A673 (cell line): ENCODE measurements at regions of chr11 and their contacts with region 1.

Region 1: GRCh38 chr11:19276859-19277808 is 36.4 kb upstream of the E2F8 start:
- DNase-seq: no peak
- H3K4me3 ChIP-seq: no peak overlapping the region
- H3K27ac ChIP-seq: no peak overlapping the region
- H3K4me1 ChIP-seq: no peaks in the 10 kb centered on the region
- H3K27me3 ChIP-seq: no peaks in the 10 kb centered on the region
- CTCF ChIP-seq: no peak

Region 2: GRCh38 chr11:19244102-19244501 is 33.0 kb before region 1 on chr11:
- CTCF ChIA-PET with region 1: no interaction called
- POLR2A ChIA-PET with region 1: no interaction called
- intact Hi-C with region 1: loop called (anchors 1 kb)
- DNase-seq: no peak
- H3K4me3 ChIP-seq: no peak overlapping the region
- H3K27ac ChIP-seq: no peak overlapping the region
- H3K4me1 ChIP-seq: peaks cover 3% of the 10 kb centered on the region
- H3K27me3 ChIP-seq: no peaks in the 10 kb centered on the region
- CTCF ChIP-seq: no peak

Region 3: DNA sequence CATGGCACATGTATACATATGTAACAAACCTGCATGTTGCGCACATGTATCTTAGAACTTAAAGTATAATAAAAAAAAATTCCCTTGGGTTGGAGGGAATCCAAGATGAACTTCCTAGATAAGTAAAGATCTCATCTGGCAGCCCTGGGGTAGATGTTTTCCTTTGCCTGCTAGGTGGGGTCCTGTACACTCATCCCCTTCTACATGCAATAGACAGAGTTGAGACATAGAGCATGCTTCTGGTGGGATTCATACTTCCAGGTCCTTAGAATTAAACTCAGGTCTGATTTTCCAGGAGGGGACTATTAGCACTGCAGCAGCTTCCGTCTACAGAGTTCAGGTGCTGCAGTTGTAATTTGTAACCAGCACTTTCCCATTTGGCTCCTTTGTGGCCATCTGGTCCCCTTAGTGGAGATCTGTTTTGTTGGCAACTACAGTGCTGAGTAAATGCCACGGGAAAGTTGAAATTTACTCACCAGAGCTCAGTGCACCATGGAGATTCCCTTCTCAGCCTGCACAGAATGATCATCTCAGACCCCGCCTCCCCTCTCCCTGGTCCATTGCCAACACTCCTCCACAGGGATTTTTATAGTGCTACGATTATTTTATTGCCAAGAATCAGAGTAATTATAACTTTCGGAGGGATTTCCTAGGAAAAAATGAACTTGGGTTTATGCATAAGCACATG is 183.7 kb after region 1 on chr11:
- CTCF ChIA-PET with region 1: no interaction called
- POLR2A ChIA-PET with region 1: no interaction called
- intact Hi-C with region 1: no loop called
- DNase-seq: no peak
- H3K4me3 ChIP-seq: no peak overlapping the region
- H3K27ac ChIP-seq: no peak overlapping the region
- H3K4me1 ChIP-seq: no peaks in the 10 kb centered on the region
- H3K27me3 ChIP-seq: no peaks in the 10 kb centered on the region
- CTCF ChIP-seq: no peak

Region 4: DNA sequence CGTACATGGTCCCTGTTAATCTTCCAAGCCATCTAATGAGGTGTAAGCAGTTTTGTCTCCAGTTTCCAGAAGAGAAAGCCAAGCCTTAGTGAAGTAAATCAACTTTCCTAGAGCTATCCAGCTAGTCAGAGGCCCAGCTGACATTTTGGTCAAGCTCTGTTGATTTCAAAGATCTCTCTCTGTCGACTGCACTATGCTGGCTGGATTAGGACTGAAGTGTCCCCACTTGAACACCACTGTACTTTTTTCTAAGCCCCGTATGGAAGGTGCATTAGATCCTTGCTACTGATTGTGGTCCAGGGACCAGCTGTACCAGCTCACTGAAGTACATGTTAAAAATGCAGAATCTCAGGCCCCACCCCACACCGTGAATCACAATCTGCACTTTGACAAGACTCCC is 259.0 kb after region 1 on chr11:
- CTCF ChIA-PET with region 1: no interaction called
- POLR2A ChIA-PET with region 1: no interaction called
- intact Hi-C with region 1: no loop called
- DNase-seq: no peak
- H3K4me3 ChIP-seq: no peak overlapping the region
- H3K27ac ChIP-seq: no peak overlapping the region
- H3K4me1 ChIP-seq: no peaks in the 10 kb centered on the region
- H3K27me3 ChIP-seq: peaks cover 4% of the 10 kb centered on the region
- CTCF ChIP-seq: no peak

Region 5: GRCh38 chr11:19903620-19904069 is 626.5 kb after region 1 on chr11:
- CTCF ChIA-PET with region 1: interaction called, 11 read pairs
- POLR2A ChIA-PET with region 1: no interaction called
- intact Hi-C with region 1: no loop called
- DNase-seq: peak; percentile 67
- H3K4me3 ChIP-seq: no peak overlapping the region
- H3K27ac ChIP-seq: no peak overlapping the region
- H3K4me1 ChIP-seq: no peaks in the 10 kb centered on the region
- H3K27me3 ChIP-seq: no peaks in the 10 kb centered on the region
- CTCF ChIP-seq: peak; percentile 75